ENCODE measurements at regions of chr17 and their contacts with region 1.

Region 1: DNA sequence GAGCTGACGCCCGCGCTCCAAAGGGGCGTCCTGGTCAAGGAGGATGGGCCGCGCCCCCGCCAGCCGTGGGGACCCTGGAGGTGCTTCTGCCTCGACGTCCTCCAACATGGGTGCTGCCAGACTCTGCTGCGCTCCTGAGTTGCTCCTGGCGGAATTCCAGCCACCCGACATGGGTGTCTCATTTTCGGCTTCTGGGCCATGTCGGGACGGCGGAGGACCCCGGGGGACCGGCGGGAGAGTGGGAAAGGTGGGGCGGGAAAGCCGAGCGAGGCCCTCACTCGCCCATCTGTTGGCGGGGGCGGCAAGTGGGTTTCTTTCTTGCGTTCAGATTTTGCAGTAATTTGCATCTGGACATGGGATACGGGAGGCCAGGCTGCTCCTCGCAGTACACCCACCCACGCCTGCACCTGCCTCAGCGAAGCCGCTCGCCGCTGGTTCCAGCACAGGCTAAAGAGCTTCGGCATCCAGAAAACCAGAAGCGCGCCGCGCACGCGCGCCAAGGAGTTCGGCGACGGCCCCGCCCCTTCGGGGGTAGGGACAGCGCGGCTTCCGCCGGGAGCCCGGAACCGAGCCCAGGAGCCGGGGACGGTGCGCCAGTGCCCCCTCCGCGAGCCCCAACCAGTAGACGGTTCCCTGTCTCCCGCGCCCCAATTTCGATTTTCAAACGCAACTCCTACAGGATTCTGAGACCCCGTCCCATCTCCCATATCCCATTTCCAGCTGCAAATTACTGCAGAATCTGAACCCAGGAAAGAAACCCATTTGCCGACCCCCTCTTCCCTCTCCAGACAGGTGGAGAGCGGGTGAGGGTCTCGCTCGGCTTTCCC is at the start of gene ARMC7:
- DNase-seq: peak; percentile 79 to 93 (median 88)
- ATAC-seq: peak; percentile 79 to 81
- H3K4me3 Mint-ChIP-seq: peak within 1 kb of the TSS; percentile 82 to 93 (median 88)
- H3K27ac Mint-ChIP-seq: peak within 1 kb of the TSS; percentile 55 to 96 (median 92)
- H3K4me1 Mint-ChIP-seq: peaks cover 20 to 38% (median 34%) of the 10 kb centered on the region in 4 donors
- H3K27me3 Mint-ChIP-seq: no peaks in the 10 kb centered on the region
- polyA plus RNA-seq, gene ARMC7: 2.7 to 3.3 (median 2.9) TPM

Region 2: GRCh38 chr17:75034236-75034908 is 75.2 kb before region 1 on chr17:
- POLR2A ChIA-PET with region 1: interaction called, 12 read pairs
- DNase-seq: peak; percentile 52 to 89 (median 78)
- ATAC-seq: peak; percentile 24
- H3K4me3 Mint-ChIP-seq: peak overlapping the region; percentile 85 to 96 (median 89)
- H3K27ac Mint-ChIP-seq: peak overlapping the region; percentile 98 to 100 (median 100)
- H3K4me1 Mint-ChIP-seq: peaks cover 38 to 66% (median 56%) of the 10 kb centered on the region in 4 donors
- H3K27me3 Mint-ChIP-seq: peaks cover 0 to 11% (median 0%) of the 10 kb centered on the region in 5 donors

Region 3: DNA sequence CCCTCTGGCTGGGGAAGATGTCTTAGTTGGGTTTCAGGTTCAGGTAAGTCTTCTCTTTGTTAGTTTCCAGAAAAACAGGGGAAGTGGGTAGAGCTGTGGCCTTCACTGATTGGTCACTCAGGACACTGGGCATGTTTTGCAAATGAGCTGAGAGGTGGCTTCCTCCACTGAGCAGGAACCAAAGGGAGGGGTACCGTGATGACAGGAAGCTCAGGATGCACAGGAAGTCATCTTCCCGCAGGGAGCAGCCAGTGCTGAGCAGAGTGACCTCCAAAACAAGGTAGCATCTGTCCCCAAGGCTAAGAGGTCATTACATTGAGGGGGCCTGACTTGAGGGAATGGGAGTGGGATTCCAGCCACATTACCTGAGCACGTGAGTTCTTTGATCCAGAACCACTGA is 16.4 kb after region 1 on chr17:
- POLR2A ChIA-PET with region 1: interaction called, 49 read pairs
- DNase-seq: no peak
- ATAC-seq: no peak
- H3K4me3 Mint-ChIP-seq: no peak overlapping the region
- H3K27ac Mint-ChIP-seq: peak overlapping the region; percentile 48 to 87 (median 78)
- H3K4me1 Mint-ChIP-seq: peaks cover 17 to 39% (median 35%) of the 10 kb centered on the region in 4 donors
- H3K27me3 Mint-ChIP-seq: no peaks in the 10 kb centered on the region

Region 4: GRCh38 chr17:75173526-75173925 is 63.9 kb after region 1 on chr17:
- POLR2A ChIA-PET with region 1: interaction called, 27 read pairs
- DNase-seq: no peak
- ATAC-seq: no peak
- H3K4me3 Mint-ChIP-seq: peak overlapping the region in 1 of 10 donors; percentile 30
- H3K27ac Mint-ChIP-seq: peak overlapping the region in 5 of 10 donors; percentile 9 to 67 (median 54)
- H3K4me1 Mint-ChIP-seq: peaks cover 4 to 37% (median 22%) of the 10 kb centered on the region in 4 donors
- H3K27me3 Mint-ChIP-seq: no peaks in the 10 kb centered on the region

Region 5: DNA sequence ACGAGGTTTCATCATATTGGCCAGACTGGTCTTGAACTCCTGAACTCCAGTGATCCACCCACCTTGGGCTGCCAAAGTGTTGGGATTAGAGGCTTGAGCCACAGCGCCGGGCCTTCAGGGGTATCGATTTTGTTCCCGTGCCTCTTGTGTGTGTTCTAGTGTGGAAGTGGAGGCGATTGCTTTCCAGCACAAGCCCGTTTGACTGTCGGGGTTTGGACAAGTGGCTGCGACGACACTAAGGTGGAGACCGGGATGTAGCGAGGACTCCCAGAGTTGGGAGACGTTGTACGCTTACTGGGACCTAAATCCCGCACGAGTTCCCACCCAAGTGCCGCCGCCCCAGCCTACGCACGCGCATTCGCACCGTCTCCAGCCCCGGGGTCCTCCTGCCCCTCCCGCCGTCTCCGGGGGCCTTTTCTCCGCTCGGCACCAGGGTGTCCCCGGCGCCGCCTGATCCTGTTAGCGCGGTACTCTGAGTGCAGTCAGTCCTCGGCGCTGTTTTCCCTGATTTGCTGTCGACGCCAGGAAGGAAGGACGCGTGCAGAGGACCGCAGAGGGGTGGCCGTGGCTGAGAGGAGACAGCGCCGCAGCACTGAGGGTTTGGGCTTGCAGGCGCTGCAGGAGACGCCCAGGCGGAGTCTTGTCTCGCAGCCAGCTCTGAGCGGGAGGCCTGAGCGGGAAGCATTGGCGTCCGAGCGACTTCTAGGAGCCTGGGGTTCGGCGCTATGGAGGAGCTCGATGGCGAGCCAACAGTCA is 95.6 kb after region 1 on chr17 and contains the start of gene NUP85:
- POLR2A ChIA-PET with region 1: interaction called, 25 read pairs
- DNase-seq: peak; percentile 82 to 98 (median 92)
- ATAC-seq: peak; percentile 85 to 87
- H3K4me3 Mint-ChIP-seq: peak within 1 kb of the TSS; percentile 92 to 97 (median 96)
- H3K27ac Mint-ChIP-seq: peak within 1 kb of the TSS; percentile 98 to 100 (median 99)
- H3K4me1 Mint-ChIP-seq: peaks cover 11 to 40% (median 34%) of the 10 kb centered on the region in 4 donors
- H3K27me3 Mint-ChIP-seq: no peaks in the 10 kb centered on the region
- polyA plus RNA-seq, gene NUP85: 17.3 to 39.4 (median 21.4) TPM

Region 6: DNA sequence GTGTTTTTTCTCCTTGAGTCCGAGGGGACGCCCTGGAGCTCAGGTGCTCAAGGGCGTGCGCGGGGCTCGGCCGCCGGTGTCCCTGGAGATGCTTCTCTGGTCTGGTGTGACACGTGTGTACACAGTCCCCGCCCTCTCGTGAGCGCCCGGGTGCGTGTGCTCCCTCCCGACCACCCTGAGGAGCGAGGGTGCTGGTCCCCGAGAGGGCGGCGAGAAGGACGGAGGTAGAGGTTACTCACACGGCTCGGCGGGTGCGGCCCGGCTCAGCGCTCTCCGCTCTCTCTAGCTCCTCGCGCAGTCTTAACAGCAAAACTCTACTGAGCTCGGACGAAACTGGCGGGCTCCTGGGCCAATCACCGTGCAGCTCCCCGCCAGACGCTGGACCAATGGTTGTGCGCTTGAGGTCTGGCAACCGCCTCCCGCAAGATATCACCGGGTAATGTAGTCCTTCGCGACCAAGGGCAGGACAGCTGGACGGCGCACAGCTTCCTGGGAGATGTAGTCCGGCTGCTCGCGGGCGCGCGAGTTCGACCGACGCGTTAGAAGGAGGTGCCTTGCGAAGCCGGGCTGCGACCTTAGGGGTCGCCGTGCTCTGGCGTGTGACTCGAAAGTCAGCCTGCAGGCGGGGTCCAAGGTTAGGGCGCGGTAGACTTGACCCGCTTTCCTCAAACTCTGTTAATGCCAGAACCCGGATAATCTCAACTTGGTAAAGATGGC is 179.7 kb after region 1 on chr17 and contains the start of gene SLC25A19:
- POLR2A ChIA-PET with region 1: interaction called, 15 read pairs
- DNase-seq: peak; percentile 86 to 99 (median 96)
- ATAC-seq: peak; percentile 90 to 92
- H3K4me3 Mint-ChIP-seq: peak within 1 kb of the TSS; percentile 95 to 100 (median 100)
- H3K27ac Mint-ChIP-seq: peak within 1 kb of the TSS; percentile 98 to 100 (median 100)
- H3K4me1 Mint-ChIP-seq: peaks cover 10 to 24% (median 19%) of the 10 kb centered on the region in 4 donors
- H3K27me3 Mint-ChIP-seq: no peaks in the 10 kb centered on the region
- polyA plus RNA-seq, gene SLC25A19: 11.2 to 15.4 (median 13.3) TPM

Measured in naive thymus-derived CD8-positive, alpha-beta T cell (primary cell).